AG04450 (cell line): ENCODE measurements at regions of chr1 and their contacts with region 1.

Region 1: DNA sequence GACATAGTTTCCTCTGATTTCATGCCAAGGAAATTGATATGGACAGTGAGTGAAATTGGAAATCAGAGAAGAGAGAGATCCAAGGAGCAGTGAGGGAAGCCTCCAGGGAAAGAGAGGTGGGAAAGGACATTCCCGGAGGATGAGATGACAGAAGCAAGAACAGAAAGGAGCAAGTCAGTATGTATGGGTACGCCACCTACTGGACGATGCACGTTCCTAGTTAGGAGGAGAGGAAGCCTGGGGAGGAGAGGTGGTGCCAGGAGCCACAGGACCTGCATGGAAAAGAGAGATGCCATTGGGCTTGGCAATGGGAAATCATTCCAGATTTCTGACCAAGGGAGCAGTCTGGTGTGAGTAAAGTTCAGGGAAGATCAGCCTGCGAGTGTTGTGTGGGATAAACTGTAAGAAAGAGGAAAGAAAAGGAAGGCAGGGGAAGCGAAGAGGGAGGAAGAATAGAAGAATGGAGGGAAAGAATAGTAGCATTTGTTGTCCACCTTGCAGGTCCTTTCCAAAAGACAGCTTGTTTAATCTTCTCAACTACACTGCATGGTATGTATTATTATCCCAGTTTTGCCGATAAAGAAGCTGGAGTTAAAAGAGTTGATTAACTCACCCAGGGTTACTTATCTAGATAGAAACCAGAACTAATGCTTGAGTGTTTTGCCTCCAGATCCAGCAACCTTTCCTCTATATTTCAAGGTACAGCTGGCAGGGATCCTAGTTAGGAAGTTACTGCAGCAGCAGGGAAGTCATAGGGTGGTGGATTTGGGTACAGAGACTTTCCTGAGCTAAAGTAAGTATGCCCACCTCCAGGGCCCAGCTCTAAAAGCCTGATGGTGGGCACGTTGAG is 27.4 kb downstream of the C1orf116 start:
- DNase-seq: peak; percentile 23
- H3K4me3 ChIP-seq: no peak overlapping the region
- H3K27ac ChIP-seq: no peak overlapping the region
- H3K27me3 ChIP-seq: no peaks in the 10 kb centered on the region
- CTCF ChIP-seq: peak; percentile 80

Region 2: GRCh38 chr1:207032528-207033017 is 27.4 kb after region 1 on chr1 and contains the start of gene C1orf116:
- CTCF ChIA-PET with region 1: interaction called, 13 read pairs
- POLR2A ChIA-PET with region 1: no interaction called
- DNase-seq: no peak
- H3K4me3 ChIP-seq: no peak within 1 kb of the TSS
- H3K27ac ChIP-seq: no peak within 1 kb of the TSS
- H3K27me3 ChIP-seq: peaks cover 9% of the 10 kb centered on the region
- CTCF ChIP-seq: no peak
- polyA plus RNA-seq, gene C1orf116: not detected in 2 replicates

Region 3: GRCh38 chr1:207040181-207040533 is 35.0 kb after region 1 on chr1:
- CTCF ChIA-PET with region 1: interaction called, 11 read pairs
- POLR2A ChIA-PET with region 1: no interaction called
- DNase-seq: no peak
- H3K4me3 ChIP-seq: no peak overlapping the region
- H3K27ac ChIP-seq: no peak overlapping the region
- H3K27me3 ChIP-seq: no peaks in the 10 kb centered on the region
- CTCF ChIP-seq: no peak

Region 4: DNA sequence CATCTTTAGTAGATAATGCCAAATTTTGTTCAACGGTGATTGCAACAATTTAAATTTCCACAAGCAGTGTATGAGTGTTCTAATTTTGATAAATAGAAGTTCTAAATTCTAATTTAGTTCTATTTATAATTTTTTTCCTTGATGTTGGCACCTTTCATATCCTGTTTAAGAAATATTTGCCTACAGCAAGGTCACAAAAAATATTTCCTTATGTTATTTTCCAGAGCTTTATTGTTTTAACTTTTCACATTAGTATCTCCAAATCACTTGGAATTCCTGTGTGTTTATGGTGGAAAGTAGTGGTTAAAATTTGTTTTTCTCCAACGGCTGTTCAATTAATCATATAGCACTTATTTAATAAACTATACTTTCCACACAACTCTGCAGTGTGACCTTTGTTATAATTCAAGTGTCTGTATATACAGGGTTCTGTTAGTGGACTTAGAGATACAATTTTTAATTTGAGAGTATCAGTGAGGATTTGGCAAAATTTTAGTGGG is 222.0 kb after region 1 on chr1:
- CTCF ChIA-PET with region 1: no interaction called
- POLR2A ChIA-PET with region 1: no interaction called
- DNase-seq: no peak
- H3K4me3 ChIP-seq: no peak overlapping the region
- H3K27ac ChIP-seq: no peak overlapping the region
- H3K27me3 ChIP-seq: no peaks in the 10 kb centered on the region
- CTCF ChIP-seq: no peak